ENCODE measurements at regions of chr3 and their contacts with region 1.

Region 1: DNA sequence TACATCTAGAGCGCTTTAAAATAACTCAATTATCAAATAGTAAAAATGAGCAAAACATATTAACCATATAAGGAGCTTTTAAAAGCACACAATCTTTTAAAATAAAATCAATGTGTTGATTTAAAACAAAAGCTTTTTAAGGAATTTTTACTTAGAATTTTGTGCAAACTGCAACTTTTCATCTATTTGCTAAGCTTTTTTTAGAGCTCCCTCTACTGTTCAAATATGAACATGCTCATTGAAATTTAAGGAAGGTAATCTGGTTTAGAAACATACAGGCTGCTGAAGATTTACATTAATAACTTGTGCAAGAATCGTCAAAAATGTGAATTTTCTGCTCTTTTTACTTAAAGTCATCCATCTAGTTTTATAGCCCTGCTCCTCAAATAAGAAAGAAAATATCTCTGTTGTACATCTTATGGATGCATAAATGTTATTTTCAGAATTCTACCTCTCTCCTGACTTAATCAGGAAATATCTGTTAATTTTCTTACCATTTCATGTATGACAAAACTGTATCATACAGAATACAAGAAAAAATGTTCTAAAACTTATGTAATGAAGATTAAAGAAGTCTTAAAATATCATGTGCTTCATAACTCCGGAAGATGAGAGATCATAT is 469.4 kb upstream of the ROBO2 start:
- DNase-seq: no peak
- ATAC-seq: no peak

Region 2: DNA sequence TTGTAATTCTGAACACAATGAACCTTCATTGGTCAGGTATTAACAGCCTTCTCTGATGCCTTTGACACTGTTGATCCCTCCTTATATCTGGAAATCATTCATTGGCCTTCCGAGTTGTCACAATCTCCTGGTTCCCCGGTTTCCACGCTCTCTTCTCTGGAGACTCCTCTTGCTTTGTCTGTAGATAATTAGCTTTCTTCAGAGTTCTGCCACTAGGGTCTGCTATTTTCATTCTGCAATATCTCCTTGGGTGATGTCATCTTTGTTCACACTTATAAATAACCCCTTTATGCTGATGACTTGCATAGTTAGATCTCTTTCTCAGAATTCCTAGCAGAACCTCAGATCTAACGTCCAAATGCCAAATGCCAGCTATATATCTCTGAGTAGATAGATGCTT is 201.4 kb before region 1 on chr3:
- intact Hi-C with region 1: loop called (anchors 5 kb)
- DNase-seq: no peak
- ATAC-seq: no peak

Measured in Right ventricle myocardium inferior (tissue), 1 donor.